ENCODE measurements at regions of chr13 and their contacts with region 1.

Region 1: DNA sequence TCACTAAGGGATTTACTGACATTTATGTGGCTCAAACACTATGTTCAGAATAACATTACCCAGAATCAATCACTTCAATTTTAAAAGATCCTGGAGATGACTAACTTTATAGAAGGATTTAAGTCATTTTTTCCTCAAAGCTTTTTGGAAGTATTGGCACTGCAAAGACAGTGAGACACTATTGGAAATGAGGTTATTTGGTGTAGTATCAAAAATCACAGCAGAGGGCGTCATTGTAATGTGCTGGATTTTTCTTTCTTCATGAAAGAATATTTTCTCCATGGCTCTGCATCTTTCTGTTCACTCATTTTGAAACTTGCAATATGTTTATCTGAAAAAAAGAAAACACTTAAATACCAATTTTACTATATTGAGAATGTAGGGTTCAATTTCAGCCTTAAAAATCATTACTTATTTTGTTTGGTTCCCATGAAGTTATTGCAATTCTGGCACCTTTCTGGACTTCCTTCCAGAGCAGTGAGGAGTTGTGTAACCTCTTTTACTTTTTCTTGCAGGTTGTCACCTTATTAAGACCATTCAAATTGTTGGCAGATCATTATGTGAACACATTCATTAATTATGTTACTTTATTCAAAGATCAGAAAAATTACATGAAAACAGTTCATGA is 3.7 kb upstream of the CSNK1A1L start:
- DNase-seq: peak in 1 of 2 experiments; percentile 37
- H3K4me3 ChIP-seq: no peak overlapping the region
- H3K4me3 Mint-ChIP-seq: no peak overlapping the region
- H3K27ac Mint-ChIP-seq: no peak overlapping the region
- H3K4me1 ChIP-seq: no peaks in the 10 kb centered on the region
- H3K4me1 Mint-ChIP-seq: no peaks in the 10 kb centered on the region
- H3K27me3 ChIP-seq: no peaks in the 10 kb centered on the region; the same call in none of the 2 replicates
- H3K27me3 Mint-ChIP-seq: peaks cover 20% of the 10 kb centered on the region
- CTCF ChIP-seq: peak; percentile 58 to 59

Region 2: DNA sequence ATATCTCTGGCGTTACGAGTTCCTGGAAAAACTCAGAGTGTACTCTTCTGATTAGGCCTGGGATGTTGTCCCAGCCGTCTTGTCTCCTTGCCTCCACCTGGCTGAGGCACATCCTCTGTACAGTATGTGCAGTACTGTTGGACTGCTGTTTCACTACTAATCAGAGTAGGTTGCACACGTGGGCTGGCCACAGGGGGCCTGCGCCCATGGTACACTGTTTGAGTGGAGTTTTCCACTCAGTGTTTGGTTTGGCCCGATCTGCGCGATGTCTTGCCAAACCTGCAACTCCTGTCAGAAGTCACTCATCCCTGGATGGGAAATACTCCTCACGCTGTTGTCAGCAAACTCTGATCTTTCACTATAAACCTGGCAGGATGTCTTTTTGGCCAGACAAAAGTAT is 185.9 kb after region 1 on chr13:
- CTCF ChIA-PET with region 1: no interaction called
- POLR2A ChIA-PET with region 1: no interaction called
- intact Hi-C with region 1: no loop called
- DNase-seq: no peak
- H3K4me3 ChIP-seq: no peak overlapping the region
- H3K4me3 Mint-ChIP-seq: no peak overlapping the region
- H3K27ac Mint-ChIP-seq: no peak overlapping the region
- H3K4me1 ChIP-seq: no peaks in the 10 kb centered on the region
- H3K4me1 Mint-ChIP-seq: no peaks in the 10 kb centered on the region
- H3K27me3 ChIP-seq: no peaks in the 10 kb centered on the region
- H3K27me3 Mint-ChIP-seq: peaks cover 14% of the 10 kb centered on the region
- CTCF ChIP-seq: no peak

Region 3: GRCh38 chr13:37395566-37395965 is 286.4 kb after region 1 on chr13:
- CTCF ChIA-PET with region 1: no interaction called
- POLR2A ChIA-PET with region 1: no interaction called
- intact Hi-C with region 1: loop called (anchors 1 kb)
- DNase-seq: no peak
- H3K4me3 ChIP-seq: no peak overlapping the region
- H3K4me3 Mint-ChIP-seq: no peak overlapping the region
- H3K27ac Mint-ChIP-seq: no peak overlapping the region
- H3K4me1 ChIP-seq: no peaks in the 10 kb centered on the region
- H3K4me1 Mint-ChIP-seq: no peaks in the 10 kb centered on the region
- H3K27me3 ChIP-seq: no peaks in the 10 kb centered on the region
- H3K27me3 Mint-ChIP-seq: peaks cover 6% of the 10 kb centered on the region
- CTCF ChIP-seq: no peak

Region 4: GRCh38 chr13:37446503-37446902 is 337.3 kb after region 1 on chr13:
- CTCF ChIA-PET with region 1: no interaction called
- POLR2A ChIA-PET with region 1: no interaction called
- intact Hi-C with region 1: loop called (anchors 10 kb)
- DNase-seq: no peak
- H3K4me3 ChIP-seq: no peak overlapping the region
- H3K4me3 Mint-ChIP-seq: no peak overlapping the region
- H3K27ac Mint-ChIP-seq: no peak overlapping the region
- H3K4me1 ChIP-seq: no peaks in the 10 kb centered on the region
- H3K4me1 Mint-ChIP-seq: no peaks in the 10 kb centered on the region
- H3K27me3 ChIP-seq: no peaks in the 10 kb centered on the region
- H3K27me3 Mint-ChIP-seq: peaks cover 2% of the 10 kb centered on the region
- CTCF ChIP-seq: no peak

Region 5: GRCh38 chr13:37602747-37603381 is 493.7 kb after region 1 on chr13:
- CTCF ChIA-PET with region 1: no interaction called
- POLR2A ChIA-PET with region 1: no interaction called
- intact Hi-C with region 1: loop called (anchors 1 kb)
- DNase-seq: no peak
- H3K4me3 ChIP-seq: no peak overlapping the region
- H3K4me3 Mint-ChIP-seq: no peak overlapping the region
- H3K27ac Mint-ChIP-seq: no peak overlapping the region
- H3K4me1 ChIP-seq: no peaks in the 10 kb centered on the region
- H3K4me1 Mint-ChIP-seq: no peaks in the 10 kb centered on the region
- H3K27me3 ChIP-seq: no peaks in the 10 kb centered on the region; the same call in 1 of the 2 replicates
- H3K27me3 Mint-ChIP-seq: peaks cover 13% of the 10 kb centered on the region
- CTCF ChIP-seq: peak in 1 of 2 experiments; percentile 46